ENCODE measurements at regions of chr7 and their contacts with region 1.

Region 1: DNA sequence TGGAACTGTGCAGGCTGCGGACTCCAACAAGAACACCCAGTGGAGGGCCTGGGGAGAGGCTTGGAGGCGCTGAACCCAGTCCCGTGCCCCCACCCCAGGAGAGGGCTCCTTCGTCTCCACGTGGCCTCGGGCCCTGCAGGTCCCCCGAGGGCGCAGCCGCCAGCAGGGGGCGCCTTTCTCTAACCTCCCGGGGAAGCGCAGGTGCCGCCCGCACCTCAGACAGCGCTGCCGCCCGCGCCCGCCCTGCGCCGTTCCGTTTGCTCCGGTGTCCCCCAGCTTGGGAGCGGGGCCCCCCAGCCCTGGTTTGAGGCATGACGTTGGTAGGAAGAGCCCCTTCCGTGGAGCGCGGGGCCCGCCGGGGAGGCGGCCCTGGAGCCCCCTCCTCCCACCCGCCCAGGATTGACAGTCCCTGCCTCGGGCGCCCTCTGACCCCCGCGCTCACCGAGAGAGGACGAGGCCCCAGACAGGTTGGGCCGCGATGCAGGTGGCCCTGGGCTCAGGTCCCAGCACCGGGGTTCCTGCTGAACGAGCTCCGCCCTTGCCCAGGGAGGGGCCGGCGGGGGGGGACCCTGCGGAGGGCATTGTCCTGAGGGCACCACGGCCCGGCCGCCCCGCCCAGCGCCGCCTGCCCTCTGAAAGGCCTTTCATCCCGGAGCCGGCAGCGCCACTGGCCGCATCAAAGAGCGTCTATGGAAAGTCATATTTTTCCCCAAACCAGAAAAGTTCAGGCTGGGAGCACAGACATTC is 42.8 kb downstream of the FOXL3 start:
- DNase-seq: peak; percentile 79 to 96 (median 89)
- ATAC-seq: peak; percentile 96
- H3K4me3 ChIP-seq: peak overlapping the region; percentile 55
- H3K4me3 Mint-ChIP-seq: peak overlapping the region in 4 of 10 donors; percentile 35 to 64 (median 46)
- H3K27ac ChIP-seq: peak overlapping the region; percentile 12
- H3K27ac Mint-ChIP-seq: no peak overlapping the region
- H3K4me1 ChIP-seq: no peaks in the 10 kb centered on the region
- H3K4me1 Mint-ChIP-seq: peaks cover 3 to 23% (median 17%) of the 10 kb centered on the region in 7 donors
- H3K27me3 ChIP-seq: no peaks in the 10 kb centered on the region
- H3K27me3 Mint-ChIP-seq: peaks cover 0 to 7% (median 0%) of the 10 kb centered on the region in 5 donors

Region 2: DNA sequence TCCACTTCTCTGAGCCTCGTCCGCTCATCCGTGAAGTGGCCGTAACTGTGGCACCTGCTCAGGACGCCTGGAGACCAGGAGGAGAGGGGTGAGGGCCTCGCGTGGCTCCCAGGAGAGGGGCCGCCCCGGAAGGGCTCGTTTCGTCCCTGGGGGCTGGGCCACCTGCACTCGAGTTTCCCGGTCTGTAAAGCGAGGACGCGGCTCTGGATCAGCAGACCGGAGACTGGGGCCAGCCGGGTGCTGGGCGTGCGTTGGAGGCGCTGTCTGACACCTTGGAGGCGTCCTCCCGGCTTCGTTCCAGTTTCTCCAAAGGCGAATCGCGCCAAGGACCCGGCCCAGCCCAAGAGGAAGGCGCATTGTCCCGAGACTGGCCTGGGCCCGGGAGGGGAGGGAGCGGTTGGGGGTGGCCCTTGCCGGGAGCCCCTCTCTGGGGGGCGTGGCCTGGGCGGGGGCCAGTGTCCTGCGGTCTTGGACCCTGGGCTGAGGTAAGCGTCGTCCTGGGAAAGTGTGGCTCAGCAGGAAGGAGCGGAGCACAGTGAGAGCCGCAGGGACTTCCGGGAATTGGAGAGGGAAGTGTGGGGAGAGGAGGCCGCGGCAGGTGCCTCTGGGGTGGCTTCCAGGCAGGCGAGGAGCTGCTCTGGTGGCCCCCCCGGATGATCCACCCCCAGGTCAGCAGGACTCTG is 46.8 kb after region 1 on chr7:
- CTCF ChIA-PET with region 1: no interaction called
- POLR2A ChIA-PET with region 1: no interaction called
- intact Hi-C with region 1: loop called in 1 of 2 experiments (anchors 5 kb)
- DNase-seq: peak in 3 of 9 donors; percentile 3 to 21 (median 10)
- ATAC-seq: no peak
- H3K4me3 ChIP-seq: peak overlapping the region; percentile 20
- H3K4me3 Mint-ChIP-seq: peak overlapping the region in 9 of 10 donors; percentile 18 to 84 (median 76)
- H3K27ac ChIP-seq: no peak overlapping the region
- H3K27ac Mint-ChIP-seq: peak overlapping the region in 3 of 9 donors; percentile 47 to 60 (median 55)
- H3K4me1 ChIP-seq: peaks cover 19 to 32% of the 10 kb centered on the region in 2 donors
- H3K4me1 Mint-ChIP-seq: peaks cover 17 to 37% (median 23%) of the 10 kb centered on the region in 7 donors
- H3K27me3 ChIP-seq: no peaks in the 10 kb centered on the region
- H3K27me3 Mint-ChIP-seq: peaks cover 0 to 28% (median 0%) of the 10 kb centered on the region in 5 donors

Region 3: GRCh38 chr7:518630-519483 is 186.0 kb after region 1 on chr7:
- CTCF ChIA-PET with region 1: no interaction called
- POLR2A ChIA-PET with region 1: no interaction called
- intact Hi-C with region 1: loop called (anchors 5 to 10 kb)
- DNase-seq: peak in 4 of 9 donors; percentile 17 to 66 (median 24)
- ATAC-seq: peak; percentile 18
- H3K4me3 ChIP-seq: peak overlapping the region; percentile 52
- H3K4me3 Mint-ChIP-seq: peak overlapping the region; percentile 59 to 89 (median 80)
- H3K27ac ChIP-seq: no peak overlapping the region
- H3K27ac Mint-ChIP-seq: peak overlapping the region in 2 of 9 donors; percentile 39 to 43
- H3K4me1 ChIP-seq: peaks cover 0 to 30% of the 10 kb centered on the region in 2 donors
- H3K4me1 Mint-ChIP-seq: peaks cover 0 to 21% (median 15%) of the 10 kb centered on the region in 7 donors
- H3K27me3 ChIP-seq: peaks cover 0 to 20% of the 10 kb centered on the region in 2 donors
- H3K27me3 Mint-ChIP-seq: peaks cover 22 to 47% (median 24%) of the 10 kb centered on the region in 5 donors

Region 4: GRCh38 chr7:732094-732541 is 399.3 kb after region 1 on chr7:
- CTCF ChIA-PET with region 1: interaction called, 5 read pairs
- POLR2A ChIA-PET with region 1: no interaction called
- intact Hi-C with region 1: loop called in 1 of 2 experiments (anchors 1 kb)
- DNase-seq: peak in 2 of 9 donors; percentile 14 to 32
- ATAC-seq: no peak
- H3K4me3 ChIP-seq: no peak overlapping the region
- H3K4me3 Mint-ChIP-seq: no peak overlapping the region
- H3K27ac ChIP-seq: no peak overlapping the region
- H3K27ac Mint-ChIP-seq: no peak overlapping the region
- H3K4me1 ChIP-seq: peaks cover 6 to 7% of the 10 kb centered on the region in 2 donors
- H3K4me1 Mint-ChIP-seq: peaks cover 13 to 29% (median 20%) of the 10 kb centered on the region in 7 donors
- H3K27me3 ChIP-seq: no peaks in the 10 kb centered on the region
- H3K27me3 Mint-ChIP-seq: no peaks in the 10 kb centered on the region